ENCODE measurements at regions of chr1 and their contacts with region 1.

Region 1: GRCh38 chr1:12511516-12512468 is 106.2 kb downstream of the DHRS3 start:
- DNase-seq: peak in 1 of 4 experiments; percentile 51
- ATAC-seq: peak; percentile 17
- H3K4me3 ChIP-seq: no peak overlapping the region
- H3K27ac ChIP-seq: peak overlapping the region; percentile 60
- H3K4me1 ChIP-seq: peaks cover 24 to 30% of the 10 kb centered on the region in 2 experiments
- H3K27me3 ChIP-seq: no peaks in the 10 kb centered on the region
- CTCF ChIP-seq: no peak
- EP300 ChIP-seq: no peak
- POLR2A ChIP-seq: no peak
- RAD21 ChIP-seq: no peak

Region 2: DNA sequence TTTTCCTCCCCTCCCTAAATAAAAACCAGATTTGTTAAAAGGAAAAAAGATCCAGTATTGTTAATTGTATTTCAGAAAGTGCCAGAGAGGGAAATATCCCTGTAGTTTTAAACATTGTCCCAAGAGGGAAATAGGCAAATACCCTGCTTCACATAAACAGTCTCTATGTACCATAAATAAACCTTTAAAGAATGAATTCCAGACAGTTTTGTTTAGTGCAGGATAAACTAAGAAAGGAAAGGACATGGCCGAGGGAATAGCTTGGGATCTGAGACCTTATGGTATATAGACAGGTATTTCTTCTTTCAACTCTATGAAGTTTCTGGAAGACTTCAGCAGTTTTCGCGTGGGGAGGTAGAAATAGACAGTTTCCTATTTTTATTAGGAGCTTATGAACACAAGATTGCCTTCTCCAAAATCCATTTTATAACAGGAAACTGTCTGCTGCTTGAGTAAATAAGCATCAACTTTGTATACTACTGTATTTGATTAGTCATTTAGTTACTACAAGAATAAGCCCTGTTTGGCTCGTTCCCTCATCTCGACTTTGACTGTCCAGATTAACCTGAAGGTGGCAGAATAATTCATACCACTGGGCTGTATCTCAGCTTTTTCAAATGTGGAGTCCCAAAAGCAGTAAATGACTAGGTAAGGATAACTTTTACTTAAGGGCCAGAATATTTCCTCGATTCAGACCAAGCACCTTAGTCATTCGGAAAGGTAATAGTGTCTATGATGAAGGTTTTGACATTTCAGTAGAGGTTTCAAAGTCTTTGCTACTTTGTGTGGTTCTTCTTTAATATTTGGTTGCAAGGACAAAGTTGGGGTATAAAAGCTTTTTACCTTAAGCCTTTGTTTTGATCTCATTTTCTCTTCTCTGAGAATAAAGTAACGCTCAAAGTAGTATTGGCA is 104.5 kb before region 1 on chr1:
- CTCF ChIA-PET with region 1: no interaction called
- POLR2A ChIA-PET with region 1: interaction called, 3 read pairs
- in situ Hi-C with region 1: no loop called
- intact Hi-C with region 1: loop called (anchors 5 kb)
- DNase-seq: peak; percentile 39 to 81 (median 60)
- ATAC-seq: peak; percentile 87
- H3K4me3 ChIP-seq: no peak overlapping the region
- H3K27ac ChIP-seq: peak overlapping the region; percentile 60
- H3K4me1 ChIP-seq: peaks cover 11 to 33% of the 10 kb centered on the region in 2 experiments; a peak in 4 of 5 replicates
- H3K27me3 ChIP-seq: no peaks in the 10 kb centered on the region
- CTCF ChIP-seq: peak; percentile 47 to 76 (median 60); a peak in 5 of 6 replicates
- EP300 ChIP-seq: no peak; the same call in 1 of the 2 replicates
- POLR2A ChIP-seq: no peak
- RAD21 ChIP-seq: peak; percentile 83 to 89

Region 3: GRCh38 chr1:12496154-12496913 is 15.5 kb before region 1 on chr1:
- CTCF ChIA-PET with region 1: no interaction called
- POLR2A ChIA-PET with region 1: interaction called, 38 read pairs
- in situ Hi-C with region 1: no loop called
- intact Hi-C with region 1: no loop called
- DNase-seq: peak; percentile 33 to 86 (median 58)
- ATAC-seq: peak; percentile 79
- H3K4me3 ChIP-seq: no peak overlapping the region
- H3K27ac ChIP-seq: peak overlapping the region; percentile 87
- H3K4me1 ChIP-seq: peaks cover 28 to 44% of the 10 kb centered on the region in 2 experiments
- H3K27me3 ChIP-seq: no peaks in the 10 kb centered on the region
- CTCF ChIP-seq: no peak
- EP300 ChIP-seq: peak; percentile 56; the same call in 1 of the 2 replicates
- POLR2A ChIP-seq: no peak
- RAD21 ChIP-seq: peak in 1 of 2 experiments; percentile 40; a peak in 3 of 4 replicates

Region 4: DNA sequence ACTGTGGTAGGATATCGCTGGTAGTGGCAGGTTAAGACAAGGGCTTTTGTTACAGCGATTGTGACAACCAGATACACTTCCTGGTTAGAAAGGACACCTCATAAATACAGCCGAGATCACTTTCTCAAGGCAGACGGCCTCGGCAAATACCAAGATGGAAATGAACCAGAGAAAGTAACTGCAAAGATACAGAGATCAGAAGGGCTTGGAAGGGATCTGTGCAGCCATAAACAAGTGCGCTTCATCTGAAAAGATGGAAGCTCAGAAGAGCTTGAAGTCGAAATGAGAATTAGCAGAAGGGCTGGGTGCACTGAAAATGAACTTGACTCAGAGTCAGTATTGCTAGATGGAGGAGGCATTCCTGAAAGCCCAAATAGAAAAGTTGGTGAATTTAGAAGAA is 99.1 kb after region 1 on chr1:
- CTCF ChIA-PET with region 1: no interaction called
- POLR2A ChIA-PET with region 1: no interaction called
- in situ Hi-C with region 1: no loop called
- intact Hi-C with region 1: no loop called
- DNase-seq: no peak
- ATAC-seq: no peak
- H3K4me3 ChIP-seq: no peak overlapping the region
- H3K27ac ChIP-seq: no peak overlapping the region
- H3K4me1 ChIP-seq: peaks cover 0 to 13% of the 10 kb centered on the region in 2 experiments; a peak in 4 of 5 replicates
- H3K27me3 ChIP-seq: no peaks in the 10 kb centered on the region
- CTCF ChIP-seq: no peak
- EP300 ChIP-seq: no peak
- POLR2A ChIP-seq: no peak
- RAD21 ChIP-seq: no peak

Measured in K562 (cell line).